SK-N-SH (cell line): ENCODE measurements at regions of chr9 and their contacts with region 1.

Region 1: DNA sequence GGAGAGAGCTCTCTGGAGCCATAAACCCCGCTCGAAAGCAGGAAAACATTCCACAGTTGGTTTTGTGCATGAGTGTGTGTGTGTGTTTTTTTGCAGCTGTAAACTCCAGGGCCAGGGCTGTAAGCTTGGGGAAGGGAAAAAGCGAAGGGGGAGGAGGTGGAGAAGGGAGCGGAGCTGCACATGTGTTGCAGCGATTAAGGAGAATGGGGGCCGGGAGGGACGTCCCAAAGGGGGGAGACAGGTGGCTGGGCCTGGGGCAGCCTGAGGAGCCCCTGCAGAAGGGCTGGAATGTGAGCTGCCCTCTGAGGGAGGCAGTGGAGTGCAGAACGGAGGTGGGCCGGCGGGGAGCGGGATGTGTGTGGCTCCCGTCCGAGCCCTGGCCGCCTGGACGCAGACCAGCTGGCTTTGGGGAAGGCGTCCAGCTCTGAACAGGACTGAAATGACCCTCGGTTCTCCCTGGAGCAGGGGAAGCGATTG is 2.7 kb upstream of the MYMK start:
- DNase-seq: peak; percentile 71
- H3K4me3 ChIP-seq: no peak overlapping the region
- H3K27ac ChIP-seq: peak overlapping the region in 1 of 2 experiments; percentile 100; a peak in 2 of 4 replicates
- H3K4me1 ChIP-seq: peaks cover 9 to 81% of the 10 kb centered on the region in 2 experiments; a peak in 3 of 4 replicates
- H3K27me3 ChIP-seq: no peaks in the 10 kb centered on the region
- CTCF ChIP-seq: no peak
- EP300 ChIP-seq: no peak
- RAD21 ChIP-seq: no peak; the same call in 1 of the 2 replicates

Region 2: GRCh38 chr9:133239533-133240090 is 287.9 kb before region 1 on chr9:
- CTCF ChIA-PET with region 1: no interaction called
- POLR2A ChIA-PET with region 1: no interaction called
- DNase-seq: peak; percentile 9
- H3K4me3 ChIP-seq: no peak overlapping the region
- H3K27ac ChIP-seq: no peak overlapping the region
- H3K4me1 ChIP-seq: peaks cover 0 to 2% of the 10 kb centered on the region in 2 experiments; a peak in 1 of 4 replicates
- H3K27me3 ChIP-seq: peaks cover 9% of the 10 kb centered on the region; the same call in 1 of the 2 replicates
- CTCF ChIP-seq: no peak
- EP300 ChIP-seq: no peak
- RAD21 ChIP-seq: no peak

Region 3: GRCh38 chr9:133290751-133291302 is 236.7 kb before region 1 on chr9:
- CTCF ChIA-PET with region 1: no interaction called
- POLR2A ChIA-PET with region 1: no interaction called
- DNase-seq: no peak
- H3K4me3 ChIP-seq: no peak overlapping the region; a peak in 1 of 4 replicates
- H3K27ac ChIP-seq: no peak overlapping the region
- H3K4me1 ChIP-seq: no peaks in the 10 kb centered on the region
- H3K27me3 ChIP-seq: peaks cover 8% of the 10 kb centered on the region; the same call in 1 of the 2 replicates
- CTCF ChIP-seq: no peak
- EP300 ChIP-seq: no peak
- RAD21 ChIP-seq: no peak

Region 4: GRCh38 chr9:133514460-133515238 is 12.8 kb before region 1 on chr9:
- CTCF ChIA-PET with region 1: interaction called, 12 read pairs
- POLR2A ChIA-PET with region 1: interaction called, 15 read pairs
- DNase-seq: peak; percentile 85
- H3K4me3 ChIP-seq: peak overlapping the region in 1 of 2 experiments; percentile 22; a peak in 1 of 4 replicates
- H3K27ac ChIP-seq: peak overlapping the region in 1 of 2 experiments; percentile 99; a peak in 2 of 4 replicates
- H3K4me1 ChIP-seq: peaks cover 0 to 70% of the 10 kb centered on the region in 2 experiments; a peak in 2 of 4 replicates
- H3K27me3 ChIP-seq: no peaks in the 10 kb centered on the region
- CTCF ChIP-seq: no peak
- EP300 ChIP-seq: no peak
- RAD21 ChIP-seq: no peak